Sigmoid colon (tissue), 7 donors: ENCODE measurements at regions of chr2 and their contacts with region 1.

Region 1: GRCh38 chr2:200811336-200812121 is at the start of gene BZW1:
- DNase-seq: peak; percentile 99
- H3K4me3 ChIP-seq: peak within 1 kb of the TSS; percentile 76 to 99 (median 98)
- H3K27ac ChIP-seq: peak within 1 kb of the TSS; percentile 99 to 100 (median 100)
- H3K4me1 ChIP-seq: peaks cover 0 to 38% (median 35%) of the 10 kb centered on the region in 4 donors
- H3K27me3 ChIP-seq: no peaks in the 10 kb centered on the region
- CTCF ChIP-seq: no peak
- EP300 ChIP-seq: no peak
- POLR2A ChIP-seq: peak; percentile 94 to 96
- total RNA-seq, gene BZW1: 77.9 to 119 (median 100) TPM

Region 2: DNA sequence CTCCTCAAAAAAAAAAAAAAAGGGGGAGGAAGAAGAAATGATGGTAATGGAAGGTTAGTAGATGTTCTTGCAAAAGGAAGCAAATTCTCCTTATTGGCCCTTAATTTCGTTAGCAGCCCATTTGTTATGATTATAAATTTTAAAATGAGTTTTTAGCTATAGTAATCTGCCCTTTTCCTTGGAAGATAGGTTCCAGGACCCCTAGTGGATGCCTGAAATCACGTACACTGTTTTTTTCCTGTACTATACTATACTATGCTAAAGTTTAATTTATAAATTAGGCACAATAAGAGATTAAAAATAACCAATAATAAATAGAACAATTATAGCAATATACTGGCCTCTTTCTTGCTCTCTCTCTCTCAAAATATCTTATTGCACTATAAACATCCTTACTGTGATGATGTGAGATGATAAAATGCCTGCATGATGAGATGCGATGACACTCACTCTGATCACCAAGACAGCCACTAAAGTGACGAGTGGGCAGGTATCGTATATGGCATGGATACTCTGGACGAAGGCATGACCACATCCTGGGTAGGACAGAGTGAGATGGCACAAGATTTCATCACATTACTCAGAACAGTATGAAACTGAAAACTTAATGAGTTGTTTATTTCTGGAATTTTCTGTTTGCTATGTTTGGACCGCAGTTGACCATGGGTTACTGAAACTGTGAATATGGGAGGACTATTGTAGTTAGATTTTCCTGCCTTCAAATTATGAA is 388.8 kb before region 1 on chr2:
- intact Hi-C with region 1: no loop called
- DNase-seq: no peak
- H3K4me3 ChIP-seq: no peak overlapping the region
- H3K27ac ChIP-seq: no peak overlapping the region
- H3K4me1 ChIP-seq: no peaks in the 10 kb centered on the region
- H3K27me3 ChIP-seq: no peaks in the 10 kb centered on the region
- CTCF ChIP-seq: no peak
- EP300 ChIP-seq: no peak
- POLR2A ChIP-seq: no peak

Region 3: DNA sequence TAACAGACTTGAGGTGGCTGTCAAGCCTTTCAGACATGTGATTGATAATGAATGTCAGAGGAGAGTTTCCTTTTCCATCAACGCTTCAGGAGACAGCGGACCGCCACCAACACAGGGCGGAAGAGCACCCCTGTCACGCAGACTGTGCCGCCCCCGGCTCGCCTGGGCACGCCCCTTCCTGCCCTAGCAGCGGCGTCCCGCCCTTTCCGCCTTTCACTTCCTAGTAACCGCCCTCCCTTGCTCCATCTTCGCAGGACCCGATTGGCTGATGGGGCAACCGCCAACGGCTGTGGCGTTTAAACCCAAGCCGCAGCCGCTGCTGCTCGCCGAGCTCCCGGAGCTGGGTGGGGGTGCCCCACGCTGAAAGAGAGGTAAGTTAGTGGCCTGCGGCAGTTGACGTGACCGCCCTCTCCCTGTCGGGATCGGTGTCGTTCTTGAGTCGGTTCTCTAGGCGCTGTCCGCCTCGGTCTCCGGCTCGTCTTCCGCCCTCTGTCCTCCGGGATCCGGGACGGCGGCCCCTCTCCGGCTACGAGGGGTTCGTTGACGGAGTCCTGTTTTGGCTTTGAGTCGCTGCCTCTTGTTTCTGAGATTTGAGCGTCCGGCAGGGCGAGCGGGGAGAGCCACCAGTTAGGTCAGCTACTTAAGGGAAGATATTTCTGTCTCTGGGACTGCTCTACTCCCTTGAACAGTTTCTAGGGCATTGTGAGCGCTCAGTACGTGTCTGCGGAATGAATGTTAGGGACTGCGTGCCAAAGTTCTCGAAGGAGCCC is 285.5 kb before region 1 on chr2 and contains the start of gene SGO2:
- intact Hi-C with region 1: loop called (anchors 5 kb)
- DNase-seq: peak; percentile 97
- H3K4me3 ChIP-seq: peak within 1 kb of the TSS; percentile 55 to 88 (median 71)
- H3K27ac ChIP-seq: peak within 1 kb of the TSS; percentile 56 to 64 (median 60)
- H3K4me1 ChIP-seq: peaks cover 0 to 14% (median 9%) of the 10 kb centered on the region in 4 donors
- H3K27me3 ChIP-seq: no peaks in the 10 kb centered on the region
- CTCF ChIP-seq: no peak
- EP300 ChIP-seq: no peak
- POLR2A ChIP-seq: peak; percentile 58 to 74
- total RNA-seq, gene SGO2: 1.1 to 3.3 (median 2.2) TPM

Region 4: GRCh38 chr2:200713003-200713703 is 98.4 kb before region 1 on chr2:
- intact Hi-C with region 1: loop called (anchors 1 kb)
- DNase-seq: peak; percentile 89
- H3K4me3 ChIP-seq: peak overlapping the region; percentile 28 to 50 (median 47)
- H3K27ac ChIP-seq: peak overlapping the region; percentile 50 to 74 (median 67)
- H3K4me1 ChIP-seq: peaks cover 0 to 5% (median 2%) of the 10 kb centered on the region in 4 donors
- H3K27me3 ChIP-seq: no peaks in the 10 kb centered on the region
- CTCF ChIP-seq: peak in 3 of 4 experiments; percentile 59 to 77 (median 63)
- EP300 ChIP-seq: no peak
- POLR2A ChIP-seq: peak in 1 of 2 donors; percentile 30

Region 5: GRCh38 chr2:200765995-200766660 is 45.4 kb before region 1 on chr2:
- intact Hi-C with region 1: no loop called
- DNase-seq: no peak
- H3K4me3 ChIP-seq: no peak overlapping the region
- H3K27ac ChIP-seq: no peak overlapping the region
- H3K4me1 ChIP-seq: no peaks in the 10 kb centered on the region
- H3K27me3 ChIP-seq: no peaks in the 10 kb centered on the region
- CTCF ChIP-seq: no peak
- EP300 ChIP-seq: no peak
- POLR2A ChIP-seq: no peak